Activated T-helper 1 cell treated with anti-CD3 and anti-CD28 coated beads, Interleukin-12 subunit alpha, Interleukin-12 subunit beta, Interleukin-2, Interleukin-4 antibody, amounts not matched to agents 30 ng/mL and 10 ng/mL and 1 ng/mL, durations not matched to agents 14 hours and 24 hours and 36 hours (primary cell): ENCODE measurements at regions of chr20 and their contacts with region 1.

Region 1: GRCh38 chr20:50338479-50339391 is 148.1 kb downstream of the CEBPB start:
- DNase-seq: peak; percentile 73
- H3K4me3 Mint-ChIP-seq: peak overlapping the region; percentile 74
- H3K27ac Mint-ChIP-seq: peak overlapping the region; percentile 89
- H3K4me1 Mint-ChIP-seq: peaks cover 75% of the 10 kb centered on the region
- H3K27me3 Mint-ChIP-seq: peaks cover 5% of the 10 kb centered on the region

Region 2: GRCh38 chr20:50189681-50190582 is 148.8 kb before region 1 on chr20:
- intact Hi-C with region 1: loop called (anchors 1 kb)
- DNase-seq: peak; percentile 82
- H3K4me3 Mint-ChIP-seq: peak overlapping the region; percentile 51
- H3K27ac Mint-ChIP-seq: peak overlapping the region; percentile 65
- H3K4me1 Mint-ChIP-seq: peaks cover 32% of the 10 kb centered on the region
- H3K27me3 Mint-ChIP-seq: peaks cover 6% of the 10 kb centered on the region

Region 3: GRCh38 chr20:50296836-50297375 is 41.8 kb before region 1 on chr20:
- intact Hi-C with region 1: loop called (anchors 2 kb)
- DNase-seq: no peak
- H3K4me3 Mint-ChIP-seq: no peak overlapping the region
- H3K27ac Mint-ChIP-seq: no peak overlapping the region
- H3K4me1 Mint-ChIP-seq: peaks cover 26% of the 10 kb centered on the region
- H3K27me3 Mint-ChIP-seq: peaks cover 2% of the 10 kb centered on the region

Region 4: GRCh38 chr20:50385733-50386640 is 47.3 kb after region 1 on chr20:
- intact Hi-C with region 1: loop called (anchors 1 kb)
- DNase-seq: peak; percentile 77
- H3K4me3 Mint-ChIP-seq: peak overlapping the region; percentile 57
- H3K27ac Mint-ChIP-seq: peak overlapping the region; percentile 90
- H3K4me1 Mint-ChIP-seq: peaks cover 76% of the 10 kb centered on the region
- H3K27me3 Mint-ChIP-seq: peaks cover 3% of the 10 kb centered on the region

Region 5: DNA sequence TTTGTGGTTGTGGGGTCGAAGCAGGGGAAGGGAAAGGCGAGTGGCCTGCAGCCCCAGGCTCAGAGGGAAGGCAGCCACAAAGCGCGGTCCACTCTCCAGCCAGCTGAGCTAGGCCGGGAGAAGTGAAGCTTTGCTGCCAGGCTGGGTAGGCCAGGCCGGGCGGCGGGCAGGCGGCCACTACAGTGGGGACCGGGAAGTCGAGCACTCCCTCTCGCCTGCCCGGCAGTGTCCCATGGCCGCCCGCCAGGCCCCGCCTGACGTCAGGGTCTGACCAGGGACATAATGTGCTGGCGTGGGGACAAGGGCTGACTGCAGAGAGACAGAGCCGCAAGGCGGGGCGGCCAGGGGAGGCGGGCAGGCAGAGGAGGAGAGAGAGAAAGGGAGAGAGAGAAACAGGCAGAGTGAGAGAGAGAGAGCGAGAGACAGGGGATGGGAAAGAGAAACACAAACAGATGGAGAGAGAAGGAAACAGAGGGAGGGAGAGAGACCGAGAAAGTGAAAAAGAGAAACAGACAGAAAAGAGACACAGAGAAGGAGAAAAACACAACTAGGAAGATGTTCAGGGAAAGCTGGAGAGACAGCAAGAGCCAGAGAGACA is 76.9 kb after region 1 on chr20:
- intact Hi-C with region 1: no loop called
- DNase-seq: no peak
- H3K4me3 Mint-ChIP-seq: no peak overlapping the region
- H3K27ac Mint-ChIP-seq: no peak overlapping the region
- H3K4me1 Mint-ChIP-seq: no peaks in the 10 kb centered on the region
- H3K27me3 Mint-ChIP-seq: peaks cover 22% of the 10 kb centered on the region

Region 6: GRCh38 chr20:50518270-50518721 is 179.6 kb after region 1 on chr20:
- intact Hi-C with region 1: loop called (anchors 2 kb)
- DNase-seq: no peak
- H3K4me3 Mint-ChIP-seq: peak overlapping the region; percentile 89
- H3K27ac Mint-ChIP-seq: peak overlapping the region; percentile 99
- H3K4me1 Mint-ChIP-seq: peaks cover 92% of the 10 kb centered on the region
- H3K27me3 Mint-ChIP-seq: no peaks in the 10 kb centered on the region

Region 7: DNA sequence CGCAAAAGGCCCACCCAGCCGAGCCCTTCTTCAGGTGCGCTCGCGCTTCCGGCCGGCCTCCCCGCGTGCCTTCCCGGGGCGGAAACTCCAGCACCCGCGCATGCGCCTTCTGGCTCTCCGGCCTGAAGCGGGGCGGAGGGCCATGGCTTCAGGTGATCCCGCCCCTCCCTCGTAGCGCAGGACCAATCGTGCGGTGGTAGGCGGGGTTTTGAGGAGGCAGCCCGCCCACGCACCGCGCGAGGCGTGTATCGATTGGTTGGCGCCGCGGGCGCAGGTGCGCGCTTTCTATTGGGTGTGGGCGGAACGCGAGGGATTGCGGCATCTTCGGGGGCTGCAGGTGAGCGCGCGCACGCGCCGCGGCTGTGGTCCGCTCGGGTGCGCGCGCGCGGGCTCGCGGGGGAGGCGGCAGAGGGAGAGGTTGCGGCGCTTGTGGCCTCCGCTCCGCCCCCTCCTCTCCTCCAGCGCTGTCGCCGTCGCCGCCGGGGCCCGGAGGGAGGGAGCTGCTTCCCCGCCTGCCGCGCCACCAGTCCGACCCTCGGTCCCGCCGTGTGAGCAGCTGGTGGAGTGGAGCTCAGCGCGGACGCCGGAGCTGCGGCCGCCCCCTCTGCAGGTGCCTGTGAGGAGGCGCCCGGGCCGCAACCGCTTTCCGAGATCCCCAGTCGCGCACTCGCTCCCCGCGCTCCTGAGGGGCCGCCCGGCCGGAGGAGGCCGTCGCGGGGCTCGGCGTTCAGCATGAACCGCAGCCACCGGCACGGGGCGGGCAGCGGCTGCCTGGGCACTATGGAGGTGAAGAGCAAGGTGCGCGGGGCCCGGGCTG is 392.5 kb after region 1 on chr20 and contains the start of gene PARD6B:
- intact Hi-C with region 1: loop called (anchors 5 kb)
- DNase-seq: peak; percentile 99
- H3K4me3 Mint-ChIP-seq: peak within 1 kb of the TSS; percentile 86
- H3K27ac Mint-ChIP-seq: peak within 1 kb of the TSS; percentile 92
- H3K4me1 Mint-ChIP-seq: peaks cover 38% of the 10 kb centered on the region
- H3K27me3 Mint-ChIP-seq: peaks cover 1% of the 10 kb centered on the region
- total RNA-seq, gene PARD6B: 6.3 and 7.1 TPM in 2 replicates